ENCODE measurements at regions of chr3 and their contacts with region 1.

Region 1: GRCh38 chr3:157624801-157625200 is 121.6 kb upstream of the VEPH1 start:
- DNase-seq: no peak

Region 2: GRCh38 chr3:157512534-157512933 is 112.3 kb before region 1 on chr3:
- intact Hi-C with region 1: no loop called
- DNase-seq: no peak

Region 3: DNA sequence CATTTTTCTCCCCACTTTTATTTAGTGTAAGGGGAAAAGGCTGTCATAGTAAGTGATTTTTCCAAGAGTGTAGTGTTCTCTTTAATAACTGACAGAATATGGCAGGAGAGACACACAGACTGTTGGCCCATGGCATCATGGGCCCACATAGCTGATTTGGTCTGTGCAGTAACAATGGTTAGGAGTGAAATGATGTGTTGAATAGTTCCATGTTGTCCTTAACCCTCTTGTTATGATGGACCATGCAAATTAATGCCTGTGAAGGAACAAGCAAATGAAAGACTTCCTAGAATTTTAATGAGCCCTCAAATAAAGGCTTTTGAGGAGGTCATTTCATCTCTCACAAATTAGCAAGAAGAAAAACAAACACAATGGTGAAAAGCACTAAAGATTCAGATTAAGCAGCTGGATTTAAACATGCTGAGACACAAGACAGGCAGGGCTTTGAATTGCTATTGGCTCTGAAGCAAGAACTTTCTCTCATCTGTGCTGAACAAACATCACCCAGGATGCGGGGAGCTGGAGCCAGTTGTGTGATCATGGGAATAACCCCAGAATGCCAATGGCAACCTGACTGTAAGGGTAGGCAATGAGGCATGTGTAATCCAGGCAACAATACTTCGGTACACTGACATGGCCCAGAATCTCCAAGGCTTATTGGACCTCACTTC is 15.1 kb after region 1 on chr3:
- intact Hi-C with region 1: no loop called
- DNase-seq: peak in 1 of 10 donors; percentile 10

Region 4: DNA sequence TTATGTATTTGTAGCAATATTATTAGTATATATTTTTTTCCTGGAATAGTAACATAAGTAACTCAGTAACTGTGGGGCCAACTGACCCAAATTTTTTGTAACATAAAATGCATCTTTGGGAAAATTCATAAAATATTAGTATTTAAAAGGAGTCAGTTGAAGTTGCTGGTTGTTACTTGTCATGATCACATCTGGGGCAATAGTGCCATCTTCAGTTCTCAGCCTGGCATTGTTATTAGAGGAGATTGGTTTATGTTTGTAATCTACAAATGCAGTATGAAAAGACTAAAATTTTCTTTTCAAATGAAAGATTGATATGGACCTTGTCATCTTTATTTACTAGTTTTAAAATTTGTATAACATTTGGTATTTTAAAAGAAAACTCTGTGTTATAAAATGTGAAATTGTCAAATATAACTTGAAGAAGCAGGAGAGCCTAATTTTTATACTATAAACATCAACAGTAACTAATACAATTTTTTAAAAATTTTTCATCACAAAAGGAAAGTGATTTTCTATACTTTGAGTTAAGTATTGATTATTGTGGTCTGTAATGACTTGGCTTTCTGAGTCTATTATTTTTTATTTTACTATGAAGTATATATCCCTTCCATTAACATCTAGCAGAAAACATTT is 907.4 kb after region 1 on chr3:
- intact Hi-C with region 1: loop called (anchors 5 kb)
- DNase-seq: no peak

Measured in posterior cingulate gyrus (tissue), 11 donors.